Tibial artery (tissue), 4 donors: ENCODE measurements at regions of chr1 and their contacts with region 1.

Region 1: DNA sequence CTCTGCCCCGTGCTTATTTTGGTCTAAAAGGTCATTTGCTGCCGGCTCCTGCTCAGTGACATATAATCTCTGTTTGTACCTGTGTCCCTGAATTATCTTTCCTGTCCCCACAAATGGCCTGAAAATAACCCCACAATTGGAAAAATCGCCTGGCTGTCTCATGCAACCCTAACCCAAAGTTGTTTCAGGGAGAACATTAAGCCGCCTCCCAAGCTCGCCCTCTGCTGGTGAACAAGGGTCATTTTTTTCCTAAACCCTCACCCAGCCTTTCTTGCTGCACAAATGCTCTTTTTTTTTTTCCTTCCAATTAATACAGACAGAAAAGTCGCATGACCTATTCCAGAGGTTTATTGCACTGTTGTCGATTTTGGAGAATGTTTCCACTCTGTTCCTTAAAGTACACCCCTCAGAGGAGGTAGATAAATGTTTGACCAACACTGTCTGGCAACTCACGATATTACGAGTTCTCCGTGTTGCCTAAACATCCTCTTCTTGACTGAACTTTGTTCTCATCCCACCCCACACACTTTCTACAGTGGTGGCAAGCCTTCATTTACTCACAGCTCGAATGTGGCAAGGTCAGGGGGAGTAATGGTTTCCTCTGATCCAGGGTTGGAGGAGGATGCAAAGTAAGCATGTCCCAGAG is 148.7 kb downstream of the ZZZ3 start:
- DNase-seq: peak in 1 of 2 donors; percentile 70
- H3K4me3 ChIP-seq: no peak overlapping the region
- H3K27ac ChIP-seq: no peak overlapping the region
- H3K4me1 ChIP-seq: peaks cover 0 to 6% (median 2%) of the 10 kb centered on the region in 4 donors
- H3K27me3 ChIP-seq: no peaks in the 10 kb centered on the region
- CTCF ChIP-seq: peak; percentile 69 to 89

Region 2: GRCh38 chr1:77143529-77144121 is 390.2 kb before region 1 on chr1:
- intact Hi-C with region 1: loop called (anchors 2 kb)
- DNase-seq: no peak
- H3K4me3 ChIP-seq: no peak overlapping the region
- H3K27ac ChIP-seq: no peak overlapping the region
- H3K4me1 ChIP-seq: no peaks in the 10 kb centered on the region
- H3K27me3 ChIP-seq: no peaks in the 10 kb centered on the region
- CTCF ChIP-seq: peak in 1 of 2 experiments; percentile 26

Region 3: GRCh38 chr1:77202751-77203150 is 331.0 kb before region 1 on chr1:
- intact Hi-C with region 1: loop called (anchors 10 kb)
- DNase-seq: no peak
- H3K4me3 ChIP-seq: no peak overlapping the region
- H3K27ac ChIP-seq: peak overlapping the region in 1 of 2 donors; percentile 47
- H3K4me1 ChIP-seq: peaks cover 0 to 10% (median 0%) of the 10 kb centered on the region in 4 donors
- H3K27me3 ChIP-seq: no peaks in the 10 kb centered on the region
- CTCF ChIP-seq: no peak

Region 4: GRCh38 chr1:77504986-77505385 is 28.8 kb before region 1 on chr1:
- intact Hi-C with region 1: no loop called
- DNase-seq: no peak
- H3K4me3 ChIP-seq: no peak overlapping the region
- H3K27ac ChIP-seq: no peak overlapping the region
- H3K4me1 ChIP-seq: no peaks in the 10 kb centered on the region
- H3K27me3 ChIP-seq: no peaks in the 10 kb centered on the region
- CTCF ChIP-seq: no peak